GM13976 (cell line): ENCODE measurements at regions of chr2 and their contacts with region 1.

Region 1: GRCh38 chr2:168961450-168962229 is 60.5 kb downstream of the G6PC2 start:
- DNase-seq: peak; percentile 14
- CTCF ChIP-seq: peak; percentile 78

Region 2: GRCh38 chr2:169131587-169132512 is 170.2 kb after region 1 on chr2:
- in situ Hi-C with region 1: loop called (anchors 10 kb)
- DNase-seq: peak; percentile 62
- CTCF ChIP-seq: peak; percentile 76

Region 3: DNA sequence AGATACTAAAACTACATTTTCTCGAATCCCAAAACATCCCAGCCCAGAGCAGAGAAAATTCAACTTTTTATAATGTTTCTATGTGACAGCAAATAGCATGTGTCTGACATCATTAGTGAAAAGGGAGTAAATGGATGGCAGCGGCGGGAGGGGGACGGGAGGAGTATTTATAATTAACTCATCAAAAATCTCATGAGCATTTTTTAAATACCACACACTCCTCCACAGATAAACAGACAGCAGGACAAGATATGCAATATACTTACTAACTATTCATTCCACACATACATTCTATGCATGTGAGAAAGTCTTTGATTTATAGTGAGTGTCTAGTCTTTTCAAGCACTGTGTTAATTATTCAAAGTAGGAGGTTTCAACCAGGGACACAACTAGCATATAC is 293.1 kb after region 1 on chr2:
- in situ Hi-C with region 1: no loop called
- DNase-seq: no peak
- CTCF ChIP-seq: no peak

Region 4: GRCh38 chr2:169397697-169398096 is 436.1 kb after region 1 on chr2:
- in situ Hi-C with region 1: loop called (anchors 25 kb)
- DNase-seq: peak; percentile 24
- CTCF ChIP-seq: no peak